ENCODE measurements at regions of chrX and their contacts with region 1.

Region 1: GRCh38 chrX:141220344-141221035 is 21.8 kb downstream of the SPANXC start:
- DNase-seq: peak; percentile 69
- H3K4me3 ChIP-seq: no peak overlapping the region
- H3K27ac ChIP-seq: peak overlapping the region; percentile 73
- H3K4me1 ChIP-seq: peaks cover 16% of the 10 kb centered on the region
- H3K27me3 ChIP-seq: no peaks in the 10 kb centered on the region
- CTCF ChIP-seq: no peak
- POLR2A ChIP-seq: no peak

Region 2: DNA sequence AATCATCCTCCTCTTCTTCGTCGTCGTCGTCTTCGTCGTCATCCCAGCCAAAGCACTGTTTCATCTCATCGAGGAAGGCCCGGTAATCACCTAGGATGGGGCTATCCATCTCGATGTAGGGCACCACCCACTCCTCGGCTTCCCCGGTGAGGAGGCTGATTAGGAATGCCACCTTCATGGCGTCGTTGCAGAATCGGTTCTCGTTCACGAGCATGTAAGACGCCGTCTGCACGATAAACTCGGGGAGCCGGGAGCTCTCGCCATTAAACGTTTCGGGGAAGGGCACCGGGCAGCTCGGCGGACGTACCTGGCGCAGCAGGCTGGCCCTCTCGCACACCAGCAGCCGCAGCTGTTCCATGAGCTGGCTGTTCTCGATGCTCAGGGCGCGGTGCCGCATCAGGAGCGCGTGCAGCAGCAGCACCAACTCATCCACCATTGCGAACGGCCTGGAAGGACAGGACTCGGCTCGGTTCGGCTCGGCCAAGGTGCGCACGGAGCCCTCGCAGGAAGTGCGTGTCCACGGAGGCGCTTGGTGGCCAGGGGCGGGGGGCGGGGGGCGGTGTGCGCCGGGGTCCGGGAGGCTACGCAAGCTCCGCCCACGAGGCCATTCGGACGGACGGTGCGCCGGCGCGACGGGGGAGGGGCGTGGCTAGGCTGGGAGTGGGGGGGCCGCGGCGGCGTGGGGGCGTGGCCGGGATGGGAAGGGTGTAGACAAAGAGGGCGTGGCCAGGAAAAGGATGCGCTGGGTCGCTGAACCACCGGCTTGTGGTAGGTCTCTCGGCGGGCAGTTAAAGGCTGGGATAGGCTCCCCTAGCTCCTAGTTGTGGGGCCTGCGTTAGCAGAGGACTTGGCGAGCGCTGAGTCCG is 43.7 kb before region 1 on chrX and contains the start of gene LDOC1:
- CTCF ChIA-PET with region 1: no interaction called
- POLR2A ChIA-PET with region 1: no interaction called
- dilution Hi-C with region 1: no loop called
- intact Hi-C with region 1: loop called (anchors 2 kb)
- DNase-seq: peak; percentile 82
- H3K4me3 ChIP-seq: peak within 1 kb of the TSS; percentile 41 to 79 (median 68)
- H3K27ac ChIP-seq: no peak within 1 kb of the TSS
- H3K4me1 ChIP-seq: peaks cover 7% of the 10 kb centered on the region
- H3K27me3 ChIP-seq: no peaks in the 10 kb centered on the region
- CTCF ChIP-seq: no peak
- POLR2A ChIP-seq: no peak
- total RNA-seq, gene LDOC1: 46.2 and 51.4 TPM in 2 replicates

Region 3: DNA sequence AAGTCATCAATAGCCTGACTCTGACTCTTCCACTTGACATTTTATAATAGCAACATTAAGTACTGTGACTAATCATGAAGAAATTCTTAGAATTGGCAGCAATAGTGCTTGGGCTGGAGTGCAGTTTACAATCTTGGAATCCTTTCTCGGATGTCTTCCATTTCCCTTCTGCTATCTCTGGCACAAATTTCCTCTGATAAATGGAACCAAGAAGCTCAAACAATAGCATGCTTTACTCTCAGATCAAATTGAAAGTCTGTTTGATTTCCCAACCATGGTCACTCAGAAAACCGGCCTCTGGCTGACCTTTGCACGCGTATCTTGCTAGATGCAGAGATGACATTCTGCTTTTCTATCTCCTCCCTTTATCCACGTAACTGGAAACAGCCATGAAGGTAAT is 120.9 kb after region 1 on chrX:
- CTCF ChIA-PET with region 1: no interaction called
- POLR2A ChIA-PET with region 1: no interaction called
- dilution Hi-C with region 1: no loop called
- intact Hi-C with region 1: loop called (anchors 2 kb)
- DNase-seq: peak; percentile 90
- H3K4me3 ChIP-seq: no peak overlapping the region
- H3K27ac ChIP-seq: peak overlapping the region; percentile 77
- H3K4me1 ChIP-seq: peaks cover 25% of the 10 kb centered on the region
- H3K27me3 ChIP-seq: no peaks in the 10 kb centered on the region
- CTCF ChIP-seq: no peak
- POLR2A ChIP-seq: no peak